Aorta (tissue), 5 donors: ENCODE measurements at regions of chr12 and their contacts with region 1.

Region 1: DNA sequence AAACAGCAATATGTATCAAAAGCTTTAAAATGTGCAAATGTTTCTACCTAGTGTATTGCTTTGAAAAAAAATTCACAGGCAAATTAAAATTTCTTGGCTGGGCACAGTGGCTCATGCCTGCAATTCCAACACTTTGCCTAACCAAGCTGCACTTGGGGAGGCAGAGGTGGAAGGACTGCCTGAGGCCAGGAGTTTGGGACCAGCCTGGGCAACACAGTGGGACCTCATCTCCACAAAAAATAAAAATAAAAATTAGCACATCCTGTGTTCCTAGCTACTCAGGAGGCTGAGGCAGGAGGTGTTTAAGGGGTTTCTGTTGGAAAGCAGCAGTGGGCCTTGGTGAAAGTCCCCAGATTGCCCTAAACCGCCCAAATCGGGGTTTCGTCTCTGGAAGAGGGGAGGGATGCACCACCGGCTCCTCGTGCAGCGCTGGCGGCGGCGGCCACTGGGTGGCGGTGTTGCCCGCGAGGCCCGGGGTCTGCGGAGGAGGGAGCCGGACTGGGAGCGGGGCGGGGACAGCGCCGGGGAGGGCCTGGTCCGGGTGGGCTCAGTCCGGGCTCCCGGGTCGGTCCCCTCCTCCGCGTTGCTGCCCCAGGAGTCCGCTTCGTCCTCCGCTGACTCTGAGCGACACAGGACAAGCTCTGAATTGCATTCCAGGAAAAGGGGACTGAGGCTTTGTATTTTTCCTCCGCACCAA is 265.6 kb downstream of the AACS start:
- DNase-seq: peak; percentile 65 to 89
- ATAC-seq: peak; percentile 87
- H3K4me3 ChIP-seq: peak overlapping the region in 1 of 2 donors; percentile 0
- H3K27ac ChIP-seq: no peak overlapping the region
- H3K4me1 ChIP-seq: no peaks in the 10 kb centered on the region
- H3K27me3 ChIP-seq: no peaks in the 10 kb centered on the region

Region 2: DNA sequence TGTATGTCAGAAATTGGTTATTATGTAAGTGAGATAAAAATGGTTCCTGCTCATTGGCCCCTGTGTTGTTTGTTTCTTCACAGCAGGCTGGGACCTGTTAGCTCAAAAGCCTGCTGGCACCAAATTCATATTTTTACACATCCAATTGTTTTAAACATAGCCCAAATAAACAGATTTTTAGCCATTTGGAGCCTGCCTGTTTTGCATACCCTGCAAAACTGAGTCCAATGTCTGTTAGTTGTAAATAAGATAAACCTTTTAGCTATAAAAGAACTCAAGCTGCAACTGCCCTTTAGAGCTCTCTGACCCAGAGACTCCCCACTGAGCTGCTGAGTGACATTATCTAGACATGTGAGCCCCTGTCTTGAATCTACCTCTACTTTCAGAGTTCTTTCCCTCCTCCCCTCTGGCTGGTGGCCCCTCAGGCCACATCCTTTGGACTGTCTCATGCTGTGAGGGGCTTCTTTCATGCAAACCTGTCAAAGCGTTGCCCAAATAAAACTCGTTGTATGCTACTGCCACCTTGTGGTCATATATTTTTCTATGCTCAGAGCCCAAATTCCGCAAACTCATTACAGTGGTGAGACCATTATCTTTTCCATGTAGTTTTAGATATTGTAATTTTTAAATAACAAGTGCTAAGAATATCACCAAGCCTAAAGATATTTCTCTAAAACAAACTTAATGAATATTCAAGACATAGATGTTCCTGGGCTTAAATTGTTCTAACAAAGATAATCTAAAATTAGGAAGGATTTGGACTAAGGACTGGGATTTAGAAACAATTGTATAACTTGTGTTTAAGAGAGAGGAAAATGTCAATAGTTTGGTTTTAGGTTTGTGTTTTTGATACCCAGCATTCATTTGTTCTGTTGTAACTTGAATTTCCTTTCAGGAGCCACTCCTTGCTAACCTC is 72.3 kb after region 1 on chr12:
- intact Hi-C with region 1: loop called in 1 of 2 experiments (anchors 2 kb)
- DNase-seq: no peak
- ATAC-seq: no peak
- H3K4me3 ChIP-seq: no peak overlapping the region
- H3K27ac ChIP-seq: no peak overlapping the region
- H3K4me1 ChIP-seq: no peaks in the 10 kb centered on the region
- H3K27me3 ChIP-seq: no peaks in the 10 kb centered on the region

Region 3: GRCh38 chr12:125434936-125435443 is 104.2 kb after region 1 on chr12:
- intact Hi-C with region 1: no loop called
- DNase-seq: no peak
- ATAC-seq: no peak
- H3K4me3 ChIP-seq: no peak overlapping the region
- H3K27ac ChIP-seq: no peak overlapping the region
- H3K4me1 ChIP-seq: no peaks in the 10 kb centered on the region
- H3K27me3 ChIP-seq: no peaks in the 10 kb centered on the region